H1 (cell line): ENCODE measurements at regions of chr21 and their contacts with region 1.

Region 1: DNA sequence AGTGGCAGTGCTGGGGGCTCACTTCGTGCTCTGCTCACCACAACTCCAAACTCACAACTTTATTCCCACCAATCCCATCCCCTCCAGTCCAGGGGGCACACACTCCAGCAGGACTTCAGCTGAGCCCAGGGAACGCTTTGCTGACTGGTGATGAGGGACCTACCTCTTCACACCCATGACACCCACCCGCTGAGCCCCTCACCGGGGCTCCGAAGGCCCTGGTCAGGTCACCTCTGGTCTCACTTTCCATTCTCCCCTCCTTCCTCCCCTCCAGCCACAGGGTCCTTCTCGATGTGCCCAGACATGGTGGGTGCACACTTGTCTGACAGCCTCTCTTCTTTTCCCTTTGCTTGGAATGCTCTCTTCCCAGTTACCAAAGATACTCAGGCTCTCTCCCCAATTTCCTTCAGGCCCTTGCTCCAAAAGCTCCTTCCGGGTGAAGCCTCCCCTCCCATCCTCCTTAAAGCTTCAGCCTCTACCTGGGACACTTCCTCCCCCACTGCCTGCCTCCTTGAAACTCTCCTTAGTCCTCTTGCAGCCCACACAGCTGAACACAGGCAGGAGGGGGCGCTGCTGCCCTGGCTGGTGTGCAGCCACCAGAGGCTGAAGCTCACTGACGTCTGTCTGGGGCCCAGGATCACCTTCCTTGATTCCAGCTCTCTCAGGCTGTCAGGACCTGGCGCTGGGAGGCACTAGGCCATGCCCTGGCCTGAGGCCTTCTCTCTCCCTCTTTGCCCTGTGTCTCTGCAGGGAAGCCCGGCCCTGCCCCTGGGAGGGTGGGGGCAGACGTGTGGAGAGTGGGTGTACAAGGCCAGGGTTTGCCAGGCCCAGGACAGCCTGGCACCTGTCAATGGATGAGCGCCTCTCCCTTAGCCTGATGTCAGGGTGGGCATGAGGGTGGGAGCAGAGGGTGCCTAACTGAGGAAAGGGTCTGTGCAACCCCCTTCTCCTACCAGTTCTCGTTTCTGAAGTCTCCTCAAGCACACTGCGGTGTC is 1.6 kb downstream of the KCNE1 start:
- DNase-seq: peak; percentile 61 to 88
- H3K4me3 ChIP-seq: no peak overlapping the region
- H3K27ac ChIP-seq: no peak overlapping the region
- H3K4me1 ChIP-seq: no peaks in the 10 kb centered on the region
- H3K27me3 ChIP-seq: no peaks in the 10 kb centered on the region
- CTCF ChIP-seq: peak; percentile 92 to 98 (median 96)
- EP300 ChIP-seq: no peak
- POLR2A ChIP-seq: no peak
- RAD21 ChIP-seq: peak; percentile 95 to 98

Region 2: GRCh38 chr21:34498623-34499022 is 11.8 kb before region 1 on chr21:
- CTCF ChIA-PET with region 1: interaction called, 21 read pairs
- POLR2A ChIA-PET with region 1: no interaction called
- DNase-seq: no peak
- H3K4me3 ChIP-seq: no peak overlapping the region
- H3K27ac ChIP-seq: no peak overlapping the region
- H3K4me1 ChIP-seq: no peaks in the 10 kb centered on the region
- H3K27me3 ChIP-seq: no peaks in the 10 kb centered on the region
- CTCF ChIP-seq: no peak
- EP300 ChIP-seq: no peak
- POLR2A ChIP-seq: no peak
- RAD21 ChIP-seq: no peak

Region 3: GRCh38 chr21:34526618-34527290 is 16.3 kb after region 1 on chr21:
- CTCF ChIA-PET with region 1: interaction called, 17 read pairs
- POLR2A ChIA-PET with region 1: no interaction called
- DNase-seq: no peak
- H3K4me3 ChIP-seq: no peak overlapping the region
- H3K27ac ChIP-seq: no peak overlapping the region
- H3K4me1 ChIP-seq: peaks cover 8 to 19% (median 14%) of the 10 kb centered on the region in 4 experiments
- H3K27me3 ChIP-seq: no peaks in the 10 kb centered on the region; a peak in 2 of 7 replicates
- CTCF ChIP-seq: no peak
- EP300 ChIP-seq: no peak
- POLR2A ChIP-seq: no peak
- RAD21 ChIP-seq: no peak

Region 4: GRCh38 chr21:34545079-34545884 is 34.8 kb after region 1 on chr21:
- CTCF ChIA-PET with region 1: interaction called, 24 read pairs
- POLR2A ChIA-PET with region 1: no interaction called
- DNase-seq: no peak
- H3K4me3 ChIP-seq: no peak overlapping the region
- H3K27ac ChIP-seq: no peak overlapping the region
- H3K4me1 ChIP-seq: peaks cover 0 to 5% (median 2%) of the 10 kb centered on the region in 4 experiments; a peak in 4 of 7 replicates
- H3K27me3 ChIP-seq: no peaks in the 10 kb centered on the region; a peak in 1 of 7 replicates
- CTCF ChIP-seq: no peak
- EP300 ChIP-seq: no peak
- POLR2A ChIP-seq: no peak
- RAD21 ChIP-seq: no peak

Region 5: DNA sequence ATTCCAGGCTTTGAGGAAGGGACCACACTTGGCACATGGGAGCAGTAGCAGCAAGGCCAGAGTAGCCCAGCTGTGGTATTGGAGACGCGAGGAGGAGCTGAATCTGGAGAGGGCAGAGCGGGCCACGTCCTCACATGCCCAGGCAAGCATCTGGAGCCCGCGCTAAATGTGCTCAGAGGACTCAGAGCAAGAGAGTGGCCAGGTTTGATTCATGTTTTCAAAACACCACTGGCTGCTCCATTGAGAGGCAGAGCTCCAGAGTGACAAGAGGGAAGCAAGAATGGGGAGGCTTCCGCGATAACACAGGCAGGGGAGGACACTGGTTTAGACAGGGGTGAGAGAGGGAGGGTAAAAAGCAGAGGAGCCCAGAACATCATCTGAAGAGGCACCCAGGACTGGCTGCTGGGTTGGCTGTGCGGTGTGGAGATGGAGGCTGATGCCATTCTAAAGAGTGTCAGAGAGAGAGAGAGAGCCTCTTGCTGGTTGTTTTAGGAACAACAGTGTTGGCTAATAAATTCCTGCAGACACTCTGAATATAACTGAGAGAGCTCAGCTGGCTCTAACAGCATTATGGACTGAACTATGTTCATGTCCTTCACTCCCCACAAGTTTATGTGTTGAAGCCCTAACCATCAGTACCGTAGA is 72.2 kb after region 1 on chr21:
- CTCF ChIA-PET with region 1: interaction called, 112 read pairs
- POLR2A ChIA-PET with region 1: no interaction called
- DNase-seq: no peak
- H3K4me3 ChIP-seq: no peak overlapping the region
- H3K27ac ChIP-seq: no peak overlapping the region
- H3K4me1 ChIP-seq: no peaks in the 10 kb centered on the region
- H3K27me3 ChIP-seq: no peaks in the 10 kb centered on the region
- CTCF ChIP-seq: peak in 2 of 3 experiments; percentile 61 to 68; a peak in 3 of 4 replicates
- EP300 ChIP-seq: no peak
- POLR2A ChIP-seq: no peak
- RAD21 ChIP-seq: peak; percentile 77 to 81

Region 6: GRCh38 chr21:34614633-34615486 is 104.4 kb after region 1 on chr21 and contains the start of gene RCAN1:
- CTCF ChIA-PET with region 1: interaction called, 26 read pairs
- POLR2A ChIA-PET with region 1: no interaction called
- DNase-seq: peak; percentile 67 to 79
- H3K4me3 ChIP-seq: peak within 1 kb of the TSS; percentile 43 to 69 (median 54)
- H3K27ac ChIP-seq: no peak within 1 kb of the TSS
- H3K4me1 ChIP-seq: peaks cover 0 to 6% (median 2%) of the 10 kb centered on the region in 4 experiments; a peak in 3 of 7 replicates
- H3K27me3 ChIP-seq: peaks cover 7 to 23% (median 16%) of the 10 kb centered on the region in 4 experiments
- CTCF ChIP-seq: no peak
- EP300 ChIP-seq: no peak
- POLR2A ChIP-seq: no peak
- RAD21 ChIP-seq: no peak
- total RNA-seq, gene RCAN1: 5.5 and 6.4 TPM in 2 replicates

Region 7: DNA sequence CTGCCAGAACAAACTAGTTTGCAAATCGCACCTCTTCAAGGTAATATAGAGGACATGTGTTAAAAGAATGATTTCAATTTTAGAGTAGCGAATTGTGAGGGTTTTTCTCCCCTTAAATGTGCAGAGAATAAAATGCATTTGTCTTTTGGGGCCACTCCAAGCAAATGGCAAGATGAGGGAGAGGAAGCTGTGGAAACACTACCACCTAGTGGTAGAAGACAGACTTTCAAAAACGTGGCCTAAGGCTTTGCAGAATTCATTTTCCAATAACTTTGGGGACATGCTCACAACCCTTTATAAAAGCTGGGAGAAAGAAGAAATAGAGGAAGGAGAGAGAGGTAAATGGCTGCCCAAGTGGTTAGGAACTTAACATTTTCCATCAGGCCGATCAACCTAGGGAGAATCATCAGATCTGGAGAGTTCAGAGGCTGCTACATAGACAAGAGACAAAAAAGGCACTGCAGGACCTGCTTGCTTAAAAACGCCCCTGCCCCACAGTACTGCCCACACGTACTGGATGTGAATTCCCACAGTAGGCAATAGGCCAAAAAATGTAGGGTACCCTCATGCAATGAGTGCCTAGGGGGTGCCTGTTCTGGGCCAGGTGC is 120.2 kb after region 1 on chr21:
- CTCF ChIA-PET with region 1: interaction called, 74 read pairs
- POLR2A ChIA-PET with region 1: no interaction called
- DNase-seq: no peak
- H3K4me3 ChIP-seq: no peak overlapping the region
- H3K27ac ChIP-seq: no peak overlapping the region
- H3K4me1 ChIP-seq: no peaks in the 10 kb centered on the region
- H3K27me3 ChIP-seq: no peaks in the 10 kb centered on the region
- CTCF ChIP-seq: peak in 2 of 3 experiments; percentile 76 to 80; a peak in 3 of 4 replicates
- EP300 ChIP-seq: no peak
- POLR2A ChIP-seq: no peak
- RAD21 ChIP-seq: peak; percentile 95